Heart left ventricle (tissue), 16 donors: ENCODE measurements at regions of chr5 and their contacts with region 1.

Region 1: GRCh38 chr5:14581333-14581890 is at the start of gene OTULINL:
- DNase-seq: peak; percentile 88 to 95 (median 91)
- ATAC-seq: peak; percentile 88 to 98 (median 97)
- H3K4me3 ChIP-seq: peak within 1 kb of the TSS; percentile 60 to 85 (median 70)
- H3K27ac ChIP-seq: peak within 1 kb of the TSS in 9 of 12 donors; percentile 9 to 86 (median 57)
- H3K4me1 ChIP-seq: peaks cover 0 to 53% (median 13%) of the 10 kb centered on the region in 12 donors
- H3K27me3 ChIP-seq: peaks cover 0 to 42% (median 0%) of the 10 kb centered on the region in 9 donors
- CTCF ChIP-seq: no peak
- POLR2A ChIP-seq: no peak
- total RNA-seq, gene OTULINL: 0.99 to 13.6 (median 1.9) TPM

Region 2: GRCh38 chr5:14505310-14506032 is 75.9 kb before region 1 on chr5:
- intact Hi-C with region 1: loop called in 1 of 10 experiments (anchors 10 kb)
- DNase-seq: no peak
- ATAC-seq: no peak
- H3K4me3 ChIP-seq: no peak overlapping the region
- H3K27ac ChIP-seq: no peak overlapping the region
- H3K4me1 ChIP-seq: peaks cover 0 to 10% (median 0%) of the 10 kb centered on the region in 12 donors
- H3K27me3 ChIP-seq: no peaks in the 10 kb centered on the region
- CTCF ChIP-seq: peak in 1 of 12 donors; percentile 3
- POLR2A ChIP-seq: no peak

Region 3: GRCh38 chr5:14534773-14535172 is 46.6 kb before region 1 on chr5:
- intact Hi-C with region 1: loop called in 1 of 10 experiments (anchors 5 kb)
- DNase-seq: peak in 1 of 5 donors; percentile 31
- ATAC-seq: peak in 3 of 4 donors; percentile 47 to 63 (median 50)
- H3K4me3 ChIP-seq: no peak overlapping the region
- H3K27ac ChIP-seq: peak overlapping the region in 1 of 12 donors; percentile 15
- H3K4me1 ChIP-seq: peaks cover 0 to 8% (median 0%) of the 10 kb centered on the region in 12 donors
- H3K27me3 ChIP-seq: no peaks in the 10 kb centered on the region
- CTCF ChIP-seq: no peak
- POLR2A ChIP-seq: no peak

Region 4: GRCh38 chr5:14615344-14615743 is 33.9 kb after region 1 on chr5:
- intact Hi-C with region 1: no loop called
- DNase-seq: no peak
- ATAC-seq: no peak
- H3K4me3 ChIP-seq: no peak overlapping the region
- H3K27ac ChIP-seq: no peak overlapping the region
- H3K4me1 ChIP-seq: no peaks in the 10 kb centered on the region
- H3K27me3 ChIP-seq: no peaks in the 10 kb centered on the region
- CTCF ChIP-seq: no peak
- POLR2A ChIP-seq: no peak

Region 5: DNA sequence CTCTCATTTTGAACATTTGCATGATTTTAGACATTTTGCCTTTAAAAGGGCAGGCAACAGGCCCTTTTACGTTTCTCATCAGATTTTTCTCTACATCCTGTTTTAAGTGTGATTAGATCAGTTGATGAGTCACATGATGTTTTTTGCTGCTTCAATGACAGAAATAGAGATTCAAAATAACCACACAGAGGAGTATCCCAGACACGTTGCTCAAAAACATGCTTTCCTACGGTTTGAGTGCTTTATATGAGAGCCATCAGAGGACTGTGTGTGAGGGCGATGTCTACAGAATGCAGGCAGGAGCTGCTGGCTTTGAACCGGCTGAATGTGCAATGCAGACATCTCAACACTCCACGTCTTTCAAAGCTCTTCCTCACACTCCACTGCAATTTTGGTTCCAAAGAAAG is 125.2 kb after region 1 on chr5:
- intact Hi-C with region 1: no loop called
- DNase-seq: no peak
- ATAC-seq: peak in 3 of 4 donors; percentile 11 to 28 (median 24)
- H3K4me3 ChIP-seq: no peak overlapping the region
- H3K27ac ChIP-seq: peak overlapping the region in 9 of 12 donors; percentile 5 to 73 (median 21)
- H3K4me1 ChIP-seq: peaks cover 0 to 33% (median 11%) of the 10 kb centered on the region in 12 donors
- H3K27me3 ChIP-seq: no peaks in the 10 kb centered on the region
- CTCF ChIP-seq: no peak
- POLR2A ChIP-seq: no peak